ENCODE measurements at regions of chr1 and their contacts with region 1.

Region 1: DNA sequence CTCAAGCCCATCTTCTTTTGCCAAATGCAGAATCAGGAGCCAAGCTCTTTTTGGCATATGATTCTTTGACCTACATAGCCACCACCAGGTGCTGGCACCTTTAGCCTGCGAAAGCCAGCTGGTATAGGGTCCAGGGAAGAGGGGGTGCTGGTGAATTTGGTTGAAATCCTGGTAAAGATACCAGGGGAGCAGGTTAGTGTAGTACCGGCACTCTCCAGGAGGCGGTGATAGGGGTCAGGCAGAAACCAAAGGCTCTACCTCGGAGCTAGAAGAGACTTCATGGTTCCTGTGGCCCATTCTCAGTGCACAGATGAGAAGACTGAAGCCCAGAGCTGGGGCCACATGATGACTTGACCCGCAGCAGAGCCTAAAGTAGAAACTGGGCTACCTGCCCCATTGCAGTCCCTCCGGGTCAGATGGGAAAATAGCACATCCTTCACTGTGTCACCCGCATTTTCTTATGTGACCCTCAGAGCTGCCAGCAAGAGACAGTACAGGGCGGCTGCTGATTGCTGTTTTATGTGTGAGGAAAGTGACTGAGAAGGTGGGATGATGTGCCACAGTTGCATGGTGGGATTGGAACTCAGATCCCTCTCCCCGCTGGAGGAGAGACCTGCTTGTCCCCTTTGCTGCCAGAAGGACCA is 36.0 kb upstream of the IL19 start:
- DNase-seq: no peak
- H3K4me3 ChIP-seq: no peak overlapping the region
- H3K27ac ChIP-seq: no peak overlapping the region
- H3K27me3 ChIP-seq: no peaks in the 10 kb centered on the region
- CTCF ChIP-seq: peak; percentile 91

Region 2: DNA sequence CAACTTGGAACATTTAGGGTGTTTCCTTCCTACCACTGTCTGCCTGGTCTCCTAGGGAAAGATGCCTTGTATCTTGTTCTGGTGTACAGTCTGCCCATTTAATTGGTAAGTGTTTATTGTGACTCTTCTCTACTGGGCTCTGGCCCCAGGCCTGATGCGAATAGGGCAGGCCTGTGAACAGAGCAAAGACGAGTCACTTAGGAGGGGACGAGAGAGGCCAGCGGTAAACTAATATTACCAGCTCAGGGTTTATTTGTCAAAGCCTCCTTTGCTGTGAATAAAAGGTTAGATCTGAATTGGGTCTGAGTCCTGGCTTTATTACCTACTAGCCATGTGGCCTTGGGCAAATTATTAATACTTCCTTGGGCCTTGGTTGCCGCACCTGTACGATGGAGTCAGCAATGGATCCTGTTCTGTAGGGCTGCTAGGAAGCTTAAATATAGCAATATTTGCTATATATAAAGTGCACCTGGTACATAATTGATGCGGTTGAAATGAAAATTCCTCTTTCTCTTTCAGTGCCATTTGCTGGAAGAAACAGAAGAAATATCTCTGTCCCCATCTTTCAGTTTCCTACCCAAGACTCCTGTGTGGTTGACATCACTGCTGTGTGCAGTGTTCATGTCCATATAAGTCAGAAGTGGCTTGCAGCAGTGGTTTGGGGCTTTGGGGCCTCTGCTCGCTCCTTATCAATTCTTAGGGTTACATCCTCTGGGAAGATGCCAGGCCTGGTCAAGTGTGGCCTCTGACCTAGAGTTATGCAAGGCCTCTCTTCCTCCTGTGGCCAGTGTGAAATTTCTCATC is 17.5 kb before region 1 on chr1:
- CTCF ChIA-PET with region 1: interaction called, 11 read pairs
- POLR2A ChIA-PET with region 1: no interaction called
- DNase-seq: no peak
- H3K4me3 ChIP-seq: no peak overlapping the region
- H3K27ac ChIP-seq: no peak overlapping the region
- H3K27me3 ChIP-seq: no peaks in the 10 kb centered on the region
- CTCF ChIP-seq: no peak

Region 3: DNA sequence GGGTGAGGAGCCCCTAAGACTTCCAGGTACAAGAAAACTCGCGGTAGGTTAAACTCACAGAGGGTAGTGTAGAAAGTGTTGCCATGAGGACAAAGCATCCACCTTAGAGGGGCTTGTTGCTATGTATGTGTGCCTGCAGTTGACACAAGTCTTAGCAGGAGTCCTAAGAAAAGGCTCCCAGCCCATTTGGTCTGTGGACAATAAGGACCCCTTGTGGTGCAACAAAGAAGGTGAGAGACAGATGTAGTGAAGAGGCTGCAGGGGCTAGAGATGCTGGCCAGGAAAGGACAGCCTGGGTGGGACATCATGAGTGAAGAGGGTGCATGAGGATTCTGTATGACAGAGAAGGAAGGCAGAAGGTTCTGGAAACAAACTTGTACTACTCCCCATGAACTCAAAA is 74.0 kb after region 1 on chr1:
- CTCF ChIA-PET with region 1: interaction called, 18 read pairs
- POLR2A ChIA-PET with region 1: no interaction called
- DNase-seq: no peak
- H3K4me3 ChIP-seq: no peak overlapping the region
- H3K27ac ChIP-seq: no peak overlapping the region
- H3K27me3 ChIP-seq: no peaks in the 10 kb centered on the region
- CTCF ChIP-seq: peak; percentile 66

Region 4: DNA sequence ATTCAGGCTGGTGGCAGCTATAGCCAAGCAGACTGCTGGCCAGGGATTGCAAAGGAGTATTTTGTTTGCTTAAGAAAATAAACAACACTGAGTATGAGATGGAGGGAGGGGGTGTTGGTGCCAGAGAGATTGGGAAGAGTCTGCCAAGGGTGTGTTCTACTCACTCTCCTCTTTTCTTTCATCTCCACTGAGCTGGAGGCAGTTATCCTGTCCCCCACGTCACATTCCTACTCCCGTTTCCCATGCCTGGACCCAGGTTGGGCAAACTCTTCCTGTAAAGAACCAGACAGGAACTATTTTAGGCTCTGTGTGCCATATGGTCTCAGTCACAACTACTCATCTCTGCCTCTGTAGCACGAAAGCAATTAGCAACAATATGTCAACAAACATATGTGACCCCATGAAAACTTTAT is 161.2 kb after region 1 on chr1:
- CTCF ChIA-PET with region 1: interaction called, 11 read pairs
- POLR2A ChIA-PET with region 1: no interaction called
- DNase-seq: no peak
- H3K4me3 ChIP-seq: no peak overlapping the region
- H3K27ac ChIP-seq: peak overlapping the region; percentile 23
- H3K27me3 ChIP-seq: no peaks in the 10 kb centered on the region
- CTCF ChIP-seq: no peak